CD4-positive, alpha-beta T cell (primary cell): ENCODE measurements at regions of chr7 and their contacts with region 1.

Region 1: GRCh38 chr7:142788303-142789289 is 17.8 kb downstream of the PRSS2 start:
- DNase-seq: peak in 5 of 14 experiments; percentile 13 to 45 (median 25)
- ATAC-seq: no peak
- H3K4me3 ChIP-seq: peak overlapping the region; percentile 91
- H3K4me3 Mint-ChIP-seq: peak overlapping the region; percentile 97
- H3K27ac ChIP-seq: peak overlapping the region; percentile 82 to 99
- H3K27ac Mint-ChIP-seq: peak overlapping the region; percentile 98
- H3K4me1 ChIP-seq: peaks cover 37% of the 10 kb centered on the region
- H3K4me1 Mint-ChIP-seq: peaks cover 38% of the 10 kb centered on the region
- H3K27me3 ChIP-seq: no peaks in the 10 kb centered on the region
- H3K27me3 Mint-ChIP-seq: no peaks in the 10 kb centered on the region
- CTCF ChIP-seq: no peak

Region 2: GRCh38 chr7:142323706-142324105 is 464.9 kb before region 1 on chr7:
- CTCF ChIA-PET with region 1: no interaction called
- POLR2A ChIA-PET with region 1: interaction called, 23 read pairs
- intact Hi-C with region 1: no loop called
- DNase-seq: peak in 8 of 14 experiments; percentile 34 to 72 (median 54)
- ATAC-seq: peak; percentile 38
- H3K4me3 ChIP-seq: no peak overlapping the region
- H3K4me3 Mint-ChIP-seq: no peak overlapping the region
- H3K27ac ChIP-seq: peak overlapping the region in 1 of 2 donors; percentile 17
- H3K27ac Mint-ChIP-seq: peak overlapping the region; percentile 83
- H3K4me1 ChIP-seq: peaks cover 24% of the 10 kb centered on the region
- H3K4me1 Mint-ChIP-seq: peaks cover 38% of the 10 kb centered on the region
- H3K27me3 ChIP-seq: no peaks in the 10 kb centered on the region
- H3K27me3 Mint-ChIP-seq: peaks cover 16% of the 10 kb centered on the region
- CTCF ChIP-seq: peak; percentile 45

Region 3: GRCh38 chr7:142611566-142612236 is 176.9 kb before region 1 on chr7:
- CTCF ChIA-PET with region 1: no interaction called
- POLR2A ChIA-PET with region 1: interaction called, 22 read pairs
- intact Hi-C with region 1: no loop called
- DNase-seq: peak in 2 of 14 experiments; percentile 11 to 17
- ATAC-seq: no peak
- H3K4me3 ChIP-seq: no peak overlapping the region
- H3K4me3 Mint-ChIP-seq: no peak overlapping the region
- H3K27ac ChIP-seq: no peak overlapping the region
- H3K27ac Mint-ChIP-seq: peak overlapping the region; percentile 59
- H3K4me1 ChIP-seq: peaks cover 4% of the 10 kb centered on the region
- H3K4me1 Mint-ChIP-seq: peaks cover 17% of the 10 kb centered on the region
- H3K27me3 ChIP-seq: no peaks in the 10 kb centered on the region
- H3K27me3 Mint-ChIP-seq: no peaks in the 10 kb centered on the region
- CTCF ChIP-seq: no peak

Region 4: DNA sequence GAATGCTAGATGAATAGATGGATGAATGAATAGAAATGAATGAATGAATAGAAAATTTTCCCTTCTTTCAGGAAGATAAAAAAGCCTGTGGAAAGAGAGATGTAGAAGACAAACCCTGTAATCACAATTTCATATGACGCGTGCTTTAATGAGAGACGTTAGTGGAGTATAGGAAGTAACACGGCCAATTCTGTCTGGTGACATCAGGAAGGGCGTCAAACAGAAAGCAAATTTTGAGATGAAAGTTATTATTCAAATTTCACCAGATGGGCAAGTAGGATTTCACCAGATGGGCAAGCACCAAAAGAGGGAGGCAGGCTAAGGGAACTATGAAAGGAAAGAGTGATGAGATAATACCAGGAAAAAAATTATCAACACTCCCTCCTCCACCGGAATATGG is 168.2 kb before region 1 on chr7:
- CTCF ChIA-PET with region 1: no interaction called
- POLR2A ChIA-PET with region 1: interaction called, 22 read pairs
- intact Hi-C with region 1: no loop called
- DNase-seq: peak in 3 of 14 experiments; percentile 33 to 49 (median 44)
- ATAC-seq: peak; percentile 46
- H3K4me3 ChIP-seq: no peak overlapping the region
- H3K4me3 Mint-ChIP-seq: peak overlapping the region; percentile 52
- H3K27ac ChIP-seq: no peak overlapping the region
- H3K27ac Mint-ChIP-seq: peak overlapping the region; percentile 74
- H3K4me1 ChIP-seq: no peaks in the 10 kb centered on the region
- H3K4me1 Mint-ChIP-seq: peaks cover 6% of the 10 kb centered on the region
- H3K27me3 ChIP-seq: no peaks in the 10 kb centered on the region
- H3K27me3 Mint-ChIP-seq: no peaks in the 10 kb centered on the region
- CTCF ChIP-seq: no peak

Region 5: DNA sequence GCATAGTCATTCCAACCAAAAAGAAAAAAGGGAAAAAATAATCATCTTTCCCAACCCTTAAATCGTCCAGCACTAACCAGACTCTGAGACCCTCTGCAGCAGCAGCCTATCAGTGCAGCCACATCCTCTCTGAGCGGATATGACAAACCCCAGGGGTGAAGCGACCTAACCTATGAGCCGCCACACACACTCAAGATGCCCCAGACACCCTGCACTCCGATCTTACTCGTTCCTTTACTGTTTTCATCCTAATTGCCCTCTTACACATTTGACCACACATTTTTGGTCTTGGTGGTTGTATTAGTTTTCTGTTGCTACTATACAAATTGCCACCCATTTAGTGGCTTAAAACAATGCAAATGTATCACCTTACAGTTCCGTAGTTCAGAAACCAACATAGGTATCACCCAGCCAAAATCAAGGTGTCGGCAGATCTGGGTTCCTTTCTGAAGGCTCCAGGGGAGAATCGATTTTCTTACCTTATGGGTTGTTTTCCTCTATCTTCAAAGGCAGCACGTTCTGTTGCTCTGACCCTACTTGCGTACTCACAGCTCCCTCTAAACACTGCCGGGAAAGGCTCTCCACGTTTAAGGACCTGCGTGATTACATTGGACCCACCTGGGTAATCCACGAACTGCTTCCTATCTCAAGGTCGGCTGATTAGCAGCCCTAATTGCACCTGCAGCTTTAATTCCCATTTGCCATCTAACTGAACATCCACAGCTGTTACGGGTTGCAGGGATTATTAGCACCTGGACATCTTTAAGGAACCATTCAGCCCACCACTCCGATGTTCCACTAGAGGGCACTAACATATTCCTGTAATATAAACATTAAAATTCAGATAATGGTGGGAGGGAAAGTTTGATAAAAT is 76.6 kb before region 1 on chr7:
- CTCF ChIA-PET with region 1: interaction called, 10 read pairs
- POLR2A ChIA-PET with region 1: interaction called, 24 read pairs
- intact Hi-C with region 1: loop called (anchors 5 kb)
- DNase-seq: peak in 8 of 14 experiments; percentile 9 to 66 (median 36)
- ATAC-seq: peak; percentile 56
- H3K4me3 ChIP-seq: peak overlapping the region; percentile 51
- H3K4me3 Mint-ChIP-seq: peak overlapping the region; percentile 84
- H3K27ac ChIP-seq: peak overlapping the region; percentile 40 to 53
- H3K27ac Mint-ChIP-seq: peak overlapping the region; percentile 80
- H3K4me1 ChIP-seq: peaks cover 44% of the 10 kb centered on the region
- H3K4me1 Mint-ChIP-seq: peaks cover 71% of the 10 kb centered on the region
- H3K27me3 ChIP-seq: no peaks in the 10 kb centered on the region
- H3K27me3 Mint-ChIP-seq: no peaks in the 10 kb centered on the region
- CTCF ChIP-seq: peak; percentile 52

Region 6: DNA sequence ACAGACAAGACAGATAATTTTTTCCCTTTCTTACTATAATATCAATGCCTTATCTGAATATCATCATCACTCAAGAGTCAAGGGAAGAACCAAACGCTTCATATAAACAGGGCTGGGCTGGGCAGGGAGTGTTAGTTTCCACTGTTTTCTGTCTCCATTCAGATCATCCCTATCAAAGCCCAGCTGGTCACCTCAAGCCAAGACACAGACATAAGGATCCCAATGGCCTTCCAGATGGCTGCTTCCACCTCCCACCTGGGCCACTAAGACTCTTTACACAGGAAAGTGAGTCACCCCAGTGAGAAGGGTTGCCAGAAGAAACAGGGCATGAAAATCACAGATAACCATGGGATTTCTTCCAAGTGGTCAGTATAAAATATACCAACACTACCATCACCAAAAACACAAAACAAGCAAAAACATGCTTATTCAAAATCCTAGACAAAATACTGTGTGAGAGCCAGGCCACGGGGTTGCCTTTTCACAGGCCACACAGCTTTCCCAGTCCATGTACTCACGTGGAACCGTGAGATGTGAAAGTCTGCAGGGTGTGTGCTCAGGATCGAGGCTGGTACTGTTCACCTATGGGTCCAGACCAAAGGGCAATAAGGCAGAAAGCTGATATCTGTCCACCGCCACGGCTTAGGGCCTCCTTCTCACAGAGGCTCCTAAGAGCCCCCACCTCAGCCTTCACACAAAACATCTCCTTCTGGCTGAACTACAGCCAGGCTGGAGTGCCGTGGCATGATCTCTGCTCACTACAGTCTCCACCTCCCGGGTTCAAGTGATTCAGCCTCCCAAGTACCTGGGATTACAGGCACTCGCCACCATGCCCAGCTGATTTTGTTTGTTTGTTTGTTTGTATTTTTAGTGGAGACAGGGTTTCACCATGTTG is 33.7 kb before region 1 on chr7:
- CTCF ChIA-PET with region 1: no interaction called
- POLR2A ChIA-PET with region 1: no interaction called
- intact Hi-C with region 1: no loop called
- DNase-seq: no peak
- ATAC-seq: no peak
- H3K4me3 ChIP-seq: no peak overlapping the region
- H3K4me3 Mint-ChIP-seq: no peak overlapping the region
- H3K27ac ChIP-seq: no peak overlapping the region
- H3K27ac Mint-ChIP-seq: no peak overlapping the region
- H3K4me1 ChIP-seq: no peaks in the 10 kb centered on the region
- H3K4me1 Mint-ChIP-seq: no peaks in the 10 kb centered on the region
- H3K27me3 ChIP-seq: no peaks in the 10 kb centered on the region
- H3K27me3 Mint-ChIP-seq: no peaks in the 10 kb centered on the region
- CTCF ChIP-seq: no peak

Region 7: GRCh38 chr7:143042159-143042789 is 253.7 kb after region 1 on chr7:
- CTCF ChIA-PET with region 1: no interaction called
- POLR2A ChIA-PET with region 1: no interaction called
- intact Hi-C with region 1: no loop called
- DNase-seq: no peak
- ATAC-seq: no peak
- H3K4me3 ChIP-seq: no peak overlapping the region
- H3K4me3 Mint-ChIP-seq: no peak overlapping the region
- H3K27ac ChIP-seq: no peak overlapping the region
- H3K27ac Mint-ChIP-seq: no peak overlapping the region
- H3K4me1 ChIP-seq: no peaks in the 10 kb centered on the region
- H3K4me1 Mint-ChIP-seq: no peaks in the 10 kb centered on the region
- H3K27me3 ChIP-seq: no peaks in the 10 kb centered on the region
- H3K27me3 Mint-ChIP-seq: no peaks in the 10 kb centered on the region
- CTCF ChIP-seq: no peak

Region 8: GRCh38 chr7:143205560-143206293 is 417.1 kb after region 1 on chr7:
- CTCF ChIA-PET with region 1: no interaction called
- POLR2A ChIA-PET with region 1: no interaction called
- intact Hi-C with region 1: no loop called
- DNase-seq: peak in 4 of 14 experiments; percentile 31 to 65 (median 48)
- ATAC-seq: peak; percentile 63
- H3K4me3 ChIP-seq: peak overlapping the region; percentile 21
- H3K4me3 Mint-ChIP-seq: peak overlapping the region; percentile 52
- H3K27ac ChIP-seq: no peak overlapping the region
- H3K27ac Mint-ChIP-seq: no peak overlapping the region
- H3K4me1 ChIP-seq: peaks cover 11% of the 10 kb centered on the region
- H3K4me1 Mint-ChIP-seq: peaks cover 11% of the 10 kb centered on the region
- H3K27me3 ChIP-seq: no peaks in the 10 kb centered on the region
- H3K27me3 Mint-ChIP-seq: peaks cover 6% of the 10 kb centered on the region
- CTCF ChIP-seq: no peak